A549 (cell line): ENCODE measurements at regions of chr2 and their contacts with region 1.

Region 1: DNA sequence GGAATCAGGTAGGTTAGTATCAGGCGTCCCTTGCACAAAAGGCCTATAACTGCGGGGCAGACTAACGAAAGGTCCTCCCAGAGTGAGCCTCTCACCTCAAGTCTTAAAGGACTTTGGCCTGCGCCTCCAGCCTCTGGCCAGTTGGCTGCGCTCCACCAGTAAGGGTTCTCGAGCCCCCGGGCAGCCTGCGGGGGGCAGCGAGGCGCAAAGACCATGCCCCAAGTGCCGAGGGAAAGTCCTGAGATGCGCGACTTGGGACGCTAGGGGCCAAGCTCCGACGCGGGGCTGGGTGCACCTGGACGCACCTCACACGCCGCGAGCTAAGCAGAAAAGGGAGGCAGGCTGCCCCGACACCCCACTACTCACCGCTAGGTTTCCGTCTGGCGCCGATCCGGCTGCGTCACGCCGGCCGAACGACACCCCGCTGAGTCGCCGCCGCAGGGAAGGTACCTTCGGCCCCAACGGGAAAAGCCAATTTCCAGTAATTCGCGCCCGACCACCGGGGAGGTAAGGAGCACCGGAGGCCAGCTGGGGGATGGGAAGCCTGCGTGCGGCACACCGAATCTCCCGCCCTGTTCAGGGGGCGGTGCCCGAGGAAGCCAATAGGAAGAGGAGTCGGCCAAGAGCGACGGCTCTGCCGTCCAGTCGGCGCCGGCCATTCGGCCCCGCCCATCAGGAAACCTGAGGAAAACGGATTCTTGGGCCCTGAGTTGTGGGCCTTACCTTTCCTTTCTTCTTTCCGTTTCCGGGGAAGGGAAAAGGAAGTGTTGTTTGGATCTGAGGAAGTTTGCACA is at the start of gene ORC2:
- DNase-seq: peak; percentile 90 to 96
- ATAC-seq: peak; percentile 97 to 98
- H3K4me3 ChIP-seq: peak within 1 kb of the TSS; percentile 73
- H3K27ac ChIP-seq: peak within 1 kb of the TSS; percentile 94 to 96
- H3K4me1 ChIP-seq: peaks cover 41% of the 10 kb centered on the region
- CTCF ChIP-seq: peak; percentile 62
- EP300 ChIP-seq: peak in 1 of 2 experiments; percentile 10; a peak in 1 of 5 replicates
- POLR2A ChIP-seq: peak; percentile 47
- RAD21 ChIP-seq: peak; percentile 41 to 53; a peak in 4 of 5 replicates
- polyA plus RNA-seq, gene ORC2: 20.9 and 23.3 TPM in 2 replicates

Region 2: DNA sequence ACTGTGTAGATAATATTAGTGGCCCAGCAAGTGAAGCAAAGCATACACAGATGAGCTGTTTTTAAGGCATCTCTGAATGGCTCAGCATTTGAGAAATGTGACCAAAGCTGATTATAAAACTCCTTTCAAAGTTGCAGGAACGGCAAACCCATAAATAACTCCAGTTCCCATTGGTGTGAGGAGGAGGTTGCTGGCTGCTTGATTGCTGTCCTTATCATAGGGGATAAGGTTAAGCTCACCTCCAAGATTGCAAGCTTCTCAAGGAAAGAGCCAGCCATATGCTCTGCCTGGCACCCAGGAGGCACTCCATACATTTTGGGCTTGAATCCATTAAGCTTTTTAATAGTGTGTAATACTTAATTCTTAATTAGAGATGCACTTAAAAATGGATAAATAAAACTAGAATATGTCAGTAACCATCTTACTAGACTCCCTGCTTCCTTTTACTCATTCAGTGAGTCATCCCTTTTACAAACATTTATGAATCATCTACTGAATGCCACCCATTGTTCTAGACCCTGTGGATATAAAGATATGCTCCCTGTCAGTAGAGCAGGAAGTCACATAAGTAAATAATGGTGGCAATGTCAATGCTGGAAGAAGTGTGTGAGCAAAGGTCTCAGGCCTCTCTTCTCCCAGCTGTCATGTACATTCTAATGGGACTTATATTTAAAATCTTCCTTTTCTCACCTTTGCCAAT is 557.6 kb before region 1 on chr2:
- CTCF ChIA-PET with region 1: no interaction called
- POLR2A ChIA-PET with region 1: no interaction called
- DNase-seq: peak; percentile 79 to 92
- ATAC-seq: peak; percentile 93 to 95
- H3K4me3 ChIP-seq: peak overlapping the region; percentile 23; the same call in 1 of the 3 replicates
- H3K27ac ChIP-seq: peak overlapping the region; percentile 83 to 90
- H3K4me1 ChIP-seq: peaks cover 60% of the 10 kb centered on the region
- CTCF ChIP-seq: no peak
- EP300 ChIP-seq: peak; percentile 49 to 54; a peak in 2 of 5 replicates
- POLR2A ChIP-seq: no peak
- RAD21 ChIP-seq: peak; percentile 20 to 36; a peak in 2 of 5 replicates

Region 3: GRCh38 chr2:200829258-200829655 is 134.1 kb before region 1 on chr2:
- CTCF ChIA-PET with region 1: no interaction called
- POLR2A ChIA-PET with region 1: no interaction called
- DNase-seq: no peak
- ATAC-seq: peak; percentile 23 to 40; a peak in 4 of 6 replicates
- H3K4me3 ChIP-seq: no peak overlapping the region
- H3K27ac ChIP-seq: no peak overlapping the region
- H3K4me1 ChIP-seq: peaks cover 3% of the 10 kb centered on the region; the same call in 1 of the 3 replicates
- CTCF ChIP-seq: no peak
- EP300 ChIP-seq: no peak
- POLR2A ChIP-seq: no peak
- RAD21 ChIP-seq: no peak

Region 4: GRCh38 chr2:200929334-200930249 is 33.7 kb before region 1 on chr2:
- CTCF ChIA-PET with region 1: interaction called, 10 read pairs
- POLR2A ChIA-PET with region 1: no interaction called
- DNase-seq: peak in 1 of 2 experiments; percentile 30
- ATAC-seq: peak; percentile 66 to 77; a peak in 4 of 6 replicates
- H3K4me3 ChIP-seq: no peak overlapping the region
- H3K27ac ChIP-seq: peak overlapping the region; percentile 19 to 23; a peak in 4 of 6 replicates
- H3K4me1 ChIP-seq: peaks cover 33% of the 10 kb centered on the region
- CTCF ChIP-seq: no peak
- EP300 ChIP-seq: no peak
- POLR2A ChIP-seq: no peak
- RAD21 ChIP-seq: no peak

Region 5: GRCh38 chr2:200944467-200945394 is 18.6 kb before region 1 on chr2:
- CTCF ChIA-PET with region 1: interaction called, 14 read pairs
- POLR2A ChIA-PET with region 1: interaction called, 5 read pairs
- DNase-seq: peak; percentile 31 to 93
- ATAC-seq: peak; percentile 96 to 99
- H3K4me3 ChIP-seq: peak overlapping the region; percentile 24; the same call in 1 of the 3 replicates
- H3K27ac ChIP-seq: peak overlapping the region; percentile 82 to 85
- H3K4me1 ChIP-seq: peaks cover 32% of the 10 kb centered on the region
- CTCF ChIP-seq: no peak
- EP300 ChIP-seq: peak in 1 of 2 experiments; percentile 62; a peak in 1 of 5 replicates
- POLR2A ChIP-seq: no peak
- RAD21 ChIP-seq: 0 out of 5 replicates have a peak, but pooled peaks of 1 of the 2 experiments have one; percentile 18

Region 6: GRCh38 chr2:200975672-200976071 is 12.4 kb after region 1 on chr2:
- CTCF ChIA-PET with region 1: interaction called, 30 read pairs
- POLR2A ChIA-PET with region 1: interaction called, 8 read pairs
- DNase-seq: no peak
- ATAC-seq: no peak
- H3K4me3 ChIP-seq: no peak overlapping the region
- H3K27ac ChIP-seq: no peak overlapping the region
- H3K4me1 ChIP-seq: 0 out of 3 replicates have a peak, but pooled peaks cover 6% of the 10 kb centered on the region
- CTCF ChIP-seq: no peak
- EP300 ChIP-seq: no peak
- POLR2A ChIP-seq: no peak
- RAD21 ChIP-seq: no peak

Region 7: GRCh38 chr2:200985799-200986198 is 22.5 kb after region 1 on chr2:
- CTCF ChIA-PET with region 1: interaction called, 11 read pairs
- POLR2A ChIA-PET with region 1: no interaction called
- DNase-seq: no peak
- ATAC-seq: no peak
- H3K4me3 ChIP-seq: no peak overlapping the region
- H3K27ac ChIP-seq: no peak overlapping the region
- H3K4me1 ChIP-seq: no peaks in the 10 kb centered on the region
- CTCF ChIP-seq: no peak
- EP300 ChIP-seq: no peak
- POLR2A ChIP-seq: no peak
- RAD21 ChIP-seq: no peak

Region 8: GRCh38 chr2:201049455-201049854 is 86.1 kb after region 1 on chr2:
- CTCF ChIA-PET with region 1: interaction called, 11 read pairs
- POLR2A ChIA-PET with region 1: no interaction called
- DNase-seq: no peak
- ATAC-seq: no peak
- H3K4me3 ChIP-seq: no peak overlapping the region
- H3K27ac ChIP-seq: no peak overlapping the region
- H3K4me1 ChIP-seq: no peaks in the 10 kb centered on the region
- CTCF ChIP-seq: no peak
- EP300 ChIP-seq: no peak
- POLR2A ChIP-seq: no peak
- RAD21 ChIP-seq: no peak

Region 9: DNA sequence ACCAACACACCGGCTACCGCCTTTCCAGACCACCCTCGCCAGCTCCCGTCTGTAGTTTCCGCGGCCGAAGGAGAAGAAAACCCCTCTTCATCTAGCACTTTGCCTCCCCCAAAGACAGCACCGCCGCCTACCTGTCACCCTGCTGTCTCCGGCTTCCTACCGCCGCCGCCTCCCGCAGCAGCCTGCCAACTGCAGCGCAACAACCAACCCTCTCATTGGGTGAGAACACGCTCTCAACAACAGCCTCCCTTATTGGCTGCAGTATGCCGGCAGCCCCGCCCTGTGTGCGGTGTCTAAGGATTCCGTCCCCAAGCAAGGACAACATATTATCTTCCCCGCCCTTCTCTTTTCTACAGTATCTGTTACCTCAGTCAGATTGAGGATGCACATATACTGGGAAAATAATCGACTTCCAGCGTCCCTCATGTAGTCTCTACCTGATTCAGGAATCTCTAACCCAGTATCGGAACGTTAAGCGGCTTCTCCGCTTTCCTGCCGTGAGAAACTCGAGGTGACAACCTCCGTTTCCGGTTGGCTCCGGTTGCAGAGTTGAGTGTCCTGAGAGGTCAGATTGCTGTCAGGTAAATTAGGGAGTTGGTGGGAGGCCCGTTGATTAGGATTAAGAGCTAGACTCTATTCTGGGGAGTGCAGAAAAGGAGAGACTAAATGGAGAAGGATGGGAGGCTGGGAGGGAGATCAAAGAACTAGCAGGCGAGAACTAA is 108.3 kb after region 1 on chr2 and contains the starts of genes HYCC2 and NDUFB3:
- CTCF ChIA-PET with region 1: interaction called, 21 read pairs
- POLR2A ChIA-PET with region 1: interaction called, 15 read pairs
- DNase-seq: peak; percentile 96 to 97
- ATAC-seq: peak; percentile 100
- H3K4me3 ChIP-seq: peak within 1 kb of the TSS; percentile 61
- H3K27ac ChIP-seq: peak within 1 kb of the TSS; percentile 91 to 96
- H3K4me1 ChIP-seq: peaks cover 28% of the 10 kb centered on the region; the same call in 2 of the 3 replicates
- CTCF ChIP-seq: peak; percentile 11; the same call in 1 of the 3 replicates
- EP300 ChIP-seq: no peak
- POLR2A ChIP-seq: peak; percentile 53
- RAD21 ChIP-seq: no peak; a peak in 1 of 5 replicates
- polyA plus RNA-seq, gene HYCC2: 5.8 and 7.3 TPM in 2 replicates
- polyA plus RNA-seq, gene NDUFB3: 103 and 162 TPM in 2 replicates